ENCODE measurements at regions of chr18 and their contacts with region 1.

Region 1: GRCh38 chr18:60069145-60069544 is 169.3 kb downstream of the PMAIP1 start:
- DNase-seq: no peak
- ATAC-seq: no peak
- H3K4me3 ChIP-seq: no peak overlapping the region
- H3K27ac ChIP-seq: no peak overlapping the region
- H3K4me1 ChIP-seq: no peaks in the 10 kb centered on the region
- H3K27me3 ChIP-seq: no peaks in the 10 kb centered on the region
- CTCF ChIP-seq: no peak
- POLR2A ChIP-seq: no peak

Region 2: DNA sequence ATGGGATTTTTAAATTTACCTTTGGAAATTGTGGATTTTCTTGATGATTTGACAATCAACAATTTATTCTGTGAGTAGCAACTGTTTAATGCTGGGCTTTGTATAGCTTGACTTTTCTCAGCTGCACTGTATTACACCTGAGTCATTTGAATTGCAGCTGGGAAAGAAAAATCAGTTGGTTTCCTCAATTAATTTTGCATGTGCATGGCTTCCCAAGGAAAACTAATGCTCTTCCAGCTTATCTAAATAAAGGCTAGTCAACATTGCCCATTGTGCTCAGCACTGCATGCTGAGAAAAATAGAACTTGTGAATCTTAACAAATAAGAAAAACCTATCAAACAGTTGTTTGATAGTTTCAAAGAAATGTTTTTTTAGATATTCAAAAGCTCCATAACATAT is 995.8 kb after region 1 on chr18:
- in situ Hi-C with region 1: no loop called
- intact Hi-C with region 1: loop called (anchors 10 kb)
- DNase-seq: no peak
- ATAC-seq: no peak
- H3K4me3 ChIP-seq: no peak overlapping the region
- H3K27ac ChIP-seq: no peak overlapping the region
- H3K4me1 ChIP-seq: no peaks in the 10 kb centered on the region
- H3K27me3 ChIP-seq: no peaks in the 10 kb centered on the region
- CTCF ChIP-seq: no peak
- POLR2A ChIP-seq: no peak